ENCODE measurements at regions of chr5 and their contacts with region 1.

Region 1: GRCh38 chr5:141778206-141778605 is 96.2 kb upstream of the ARAP3 start:
- DNase-seq: no peak
- ATAC-seq: no peak
- H3K4me3 ChIP-seq: no peak overlapping the region
- H3K4me3 Mint-ChIP-seq: no peak overlapping the region
- H3K27ac ChIP-seq: no peak overlapping the region
- H3K27ac Mint-ChIP-seq: no peak overlapping the region
- H3K4me1 ChIP-seq: no peaks in the 10 kb centered on the region
- H3K4me1 Mint-ChIP-seq: no peaks in the 10 kb centered on the region
- H3K27me3 ChIP-seq: no peaks in the 10 kb centered on the region
- H3K27me3 Mint-ChIP-seq: no peaks in the 10 kb centered on the region
- CTCF ChIP-seq: no peak

Region 2: GRCh38 chr5:141729387-141730006 is 48.7 kb before region 1 on chr5:
- CTCF ChIA-PET with region 1: no interaction called
- POLR2A ChIA-PET with region 1: no interaction called
- intact Hi-C with region 1: loop called in 1 of 2 experiments (anchors 5 kb)
- DNase-seq: no peak
- ATAC-seq: no peak
- H3K4me3 ChIP-seq: no peak overlapping the region
- H3K4me3 Mint-ChIP-seq: no peak overlapping the region
- H3K27ac ChIP-seq: no peak overlapping the region
- H3K27ac Mint-ChIP-seq: no peak overlapping the region
- H3K4me1 ChIP-seq: no peaks in the 10 kb centered on the region
- H3K4me1 Mint-ChIP-seq: no peaks in the 10 kb centered on the region
- H3K27me3 ChIP-seq: peaks cover 0 to 2% of the 10 kb centered on the region in 2 experiments
- H3K27me3 Mint-ChIP-seq: peaks cover 33% of the 10 kb centered on the region
- CTCF ChIP-seq: no peak

Region 3: GRCh38 chr5:141747152-141748141 is 30.8 kb before region 1 on chr5:
- CTCF ChIA-PET with region 1: no interaction called
- POLR2A ChIA-PET with region 1: no interaction called
- intact Hi-C with region 1: no loop called
- DNase-seq: no peak
- ATAC-seq: no peak
- H3K4me3 ChIP-seq: no peak overlapping the region
- H3K4me3 Mint-ChIP-seq: no peak overlapping the region
- H3K27ac ChIP-seq: no peak overlapping the region
- H3K27ac Mint-ChIP-seq: no peak overlapping the region
- H3K4me1 ChIP-seq: no peaks in the 10 kb centered on the region
- H3K4me1 Mint-ChIP-seq: no peaks in the 10 kb centered on the region
- H3K27me3 ChIP-seq: peaks cover 23 to 51% of the 10 kb centered on the region in 2 experiments
- H3K27me3 Mint-ChIP-seq: peaks cover 80% of the 10 kb centered on the region
- CTCF ChIP-seq: no peak